ENCODE measurements at regions of chr1 and their contacts with region 1.

Region 1: DNA sequence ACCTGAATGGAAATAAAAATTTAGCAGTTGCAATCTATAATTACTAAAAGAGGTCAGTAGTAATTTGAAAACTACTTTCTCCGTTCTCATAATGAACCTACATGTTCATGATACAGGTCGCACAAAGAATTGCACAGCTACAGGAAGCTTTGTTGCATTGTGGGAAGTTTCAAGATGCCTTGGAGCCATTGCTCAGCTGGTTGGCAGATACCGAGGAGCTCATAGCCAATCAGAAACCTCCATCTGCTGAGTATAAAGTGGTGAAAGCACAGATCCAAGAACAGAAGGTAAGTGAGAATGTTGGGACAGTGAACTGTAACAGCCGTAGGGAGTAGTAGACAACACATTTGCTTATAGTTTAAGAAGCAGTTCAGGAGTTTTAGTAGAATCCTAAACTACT is 68.8 kb upstream of the BMP8A start:
- DNase-seq: no peak
- H3K4me3 Mint-ChIP-seq: no peak overlapping the region
- H3K27ac Mint-ChIP-seq: no peak overlapping the region
- H3K4me1 Mint-ChIP-seq: peaks cover 4% of the 10 kb centered on the region
- H3K27me3 Mint-ChIP-seq: no peaks in the 10 kb centered on the region

Region 2: DNA sequence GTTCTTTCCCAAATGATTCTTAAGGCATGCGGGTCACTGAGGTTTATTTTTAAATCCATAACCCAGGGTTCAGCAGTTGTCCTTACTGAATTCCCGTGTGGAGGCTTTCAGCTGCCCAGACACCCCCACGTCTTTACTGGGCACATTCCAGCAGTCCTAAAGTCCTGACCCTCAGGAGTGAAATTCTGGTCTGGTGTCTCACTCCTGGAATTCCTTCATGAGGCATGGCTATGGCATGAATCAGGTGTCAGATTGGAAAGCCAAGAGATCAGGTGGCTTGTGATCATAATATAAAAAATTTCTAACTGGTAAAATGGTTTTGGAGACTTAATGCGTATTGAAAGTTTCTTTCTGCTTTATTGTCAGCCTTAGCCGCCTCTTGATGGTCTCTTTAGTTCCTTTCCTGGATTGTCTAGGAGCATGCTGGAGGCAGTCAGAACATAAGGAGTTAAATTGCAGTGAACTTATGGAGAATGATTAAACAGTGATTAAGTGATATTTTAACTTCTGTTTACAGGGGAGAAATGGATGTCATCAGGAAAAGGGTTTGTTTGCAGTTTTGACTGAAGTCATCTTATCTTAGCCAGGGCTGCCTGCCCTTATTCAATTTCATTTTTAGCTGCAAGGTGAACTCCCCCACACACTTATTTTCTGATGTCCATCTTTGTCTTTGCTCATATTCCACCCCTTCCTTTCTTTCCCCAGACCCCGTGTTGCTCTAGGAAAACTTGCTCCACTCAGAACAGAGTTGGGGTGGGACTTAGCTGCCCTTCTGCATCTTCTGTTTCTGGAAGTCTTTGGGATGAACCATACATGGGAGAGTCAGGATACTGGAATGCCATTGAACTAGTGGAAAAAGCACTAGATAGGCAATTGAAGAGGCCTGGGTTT is 243.8 kb before region 1 on chr1:
- CTCF ChIA-PET with region 1: no interaction called
- POLR2A ChIA-PET with region 1: no interaction called
- DNase-seq: no peak
- H3K4me3 Mint-ChIP-seq: no peak overlapping the region
- H3K27ac Mint-ChIP-seq: no peak overlapping the region
- H3K4me1 Mint-ChIP-seq: peaks cover 9% of the 10 kb centered on the region
- H3K27me3 Mint-ChIP-seq: no peaks in the 10 kb centered on the region

Region 3: DNA sequence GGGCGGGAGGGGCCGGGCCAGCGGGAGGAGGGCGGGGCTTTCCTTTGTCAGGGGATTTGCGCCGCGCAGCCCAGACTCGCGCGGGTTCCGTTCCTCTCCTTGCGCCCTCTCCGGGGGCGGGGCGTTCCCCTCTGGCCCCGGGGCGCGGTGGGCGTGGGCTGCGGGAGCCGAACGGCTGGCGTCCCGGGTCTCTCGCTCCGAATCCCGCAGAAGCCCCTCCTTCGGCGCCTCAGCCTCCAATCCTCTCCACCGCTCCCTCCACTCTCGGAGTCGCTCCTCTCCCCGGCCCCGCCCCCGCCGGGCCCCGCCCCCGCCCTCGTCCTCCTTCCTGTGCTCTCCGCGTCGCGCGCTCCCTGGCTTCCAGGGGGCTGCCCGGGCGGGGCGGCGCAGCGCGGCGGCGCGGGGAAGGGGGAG is 14.0 kb before region 1 on chr1:
- CTCF ChIA-PET with region 1: interaction called, 17 read pairs
- POLR2A ChIA-PET with region 1: no interaction called
- DNase-seq: peak; percentile 86
- H3K4me3 Mint-ChIP-seq: peak overlapping the region; percentile 80
- H3K27ac Mint-ChIP-seq: no peak overlapping the region
- H3K4me1 Mint-ChIP-seq: peaks cover 53% of the 10 kb centered on the region
- H3K27me3 Mint-ChIP-seq: no peaks in the 10 kb centered on the region